ENCODE measurements at regions of chr6 and their contacts with region 1.

Region 1: DNA sequence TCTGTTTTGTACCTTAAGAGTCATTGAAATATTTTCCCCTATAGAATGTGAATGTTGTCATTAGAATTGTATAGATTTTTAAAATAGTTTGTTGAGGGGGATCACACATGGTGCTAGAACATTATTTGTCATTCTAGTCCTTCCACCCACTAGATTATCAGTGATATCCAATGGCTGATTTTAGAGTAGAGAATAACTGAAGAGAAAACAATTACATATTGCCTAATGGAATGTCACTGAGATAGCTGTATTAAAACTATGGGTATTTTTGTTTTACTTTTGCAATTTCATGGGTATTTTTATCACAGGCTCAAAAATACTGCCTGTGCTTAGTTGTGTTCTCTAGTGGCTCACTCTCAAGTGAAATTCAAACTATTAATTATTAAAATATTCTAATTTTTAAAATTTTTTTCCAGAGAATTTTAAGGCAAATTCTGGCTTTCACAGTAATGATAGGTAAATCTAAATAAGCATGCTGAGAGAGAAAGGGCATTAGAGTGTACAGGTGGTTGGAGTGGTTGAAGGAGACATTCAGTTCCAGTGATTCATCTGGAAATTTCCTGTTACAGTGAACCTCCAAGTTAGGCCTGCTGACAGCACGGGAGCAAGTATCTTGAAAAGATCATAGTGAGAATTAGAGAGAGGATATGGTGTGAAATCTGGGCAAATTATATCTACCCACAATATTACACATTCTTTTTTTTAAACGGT is 399.6 kb downstream of the NKAIN2 start:
- DNase-seq: peak; percentile 79
- H3K4me3 Mint-ChIP-seq: peak overlapping the region; percentile 17
- H3K27ac Mint-ChIP-seq: peak overlapping the region; percentile 99
- H3K4me1 Mint-ChIP-seq: peaks cover 28% of the 10 kb centered on the region
- H3K27me3 Mint-ChIP-seq: no peaks in the 10 kb centered on the region
- CTCF ChIP-seq: no peak

Region 2: GRCh38 chr6:124223611-124224345 is 20.5 kb after region 1 on chr6:
- CTCF ChIA-PET with region 1: no interaction called
- POLR2A ChIA-PET with region 1: interaction called, 7 read pairs
- intact Hi-C with region 1: loop called (anchors 1 kb)
- DNase-seq: peak; percentile 60
- H3K4me3 Mint-ChIP-seq: peak overlapping the region; percentile 3
- H3K27ac Mint-ChIP-seq: peak overlapping the region; percentile 96
- H3K4me1 Mint-ChIP-seq: peaks cover 38% of the 10 kb centered on the region
- H3K27me3 Mint-ChIP-seq: no peaks in the 10 kb centered on the region
- CTCF ChIP-seq: no peak

Region 3: DNA sequence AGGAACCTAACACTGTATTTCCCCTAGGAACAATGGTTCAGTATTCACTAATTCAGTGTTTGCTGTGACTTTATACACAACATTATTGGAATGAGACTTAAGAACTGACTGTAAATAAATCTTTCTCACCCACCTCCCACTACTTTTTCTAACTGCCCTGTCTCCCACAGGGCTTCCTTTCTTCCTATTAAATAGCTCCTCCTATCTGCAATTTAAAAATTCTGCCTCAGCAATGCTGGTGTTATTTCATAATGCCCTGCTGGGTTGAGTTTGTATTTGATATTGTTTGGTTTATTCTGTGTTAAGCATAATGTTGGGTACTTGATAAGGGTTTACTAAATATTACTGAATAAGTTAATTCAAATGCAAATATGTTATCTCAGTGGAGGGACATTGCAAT is 185.9 kb after region 1 on chr6:
- CTCF ChIA-PET with region 1: no interaction called
- POLR2A ChIA-PET with region 1: no interaction called
- intact Hi-C with region 1: loop called (anchors 10 kb)
- DNase-seq: peak; percentile 9
- H3K4me3 Mint-ChIP-seq: no peak overlapping the region
- H3K27ac Mint-ChIP-seq: no peak overlapping the region
- H3K4me1 Mint-ChIP-seq: no peaks in the 10 kb centered on the region
- H3K27me3 Mint-ChIP-seq: no peaks in the 10 kb centered on the region
- CTCF ChIP-seq: no peak

Region 4: GRCh38 chr6:124434421-124434820 is 231.2 kb after region 1 on chr6:
- CTCF ChIA-PET with region 1: no interaction called
- POLR2A ChIA-PET with region 1: no interaction called
- intact Hi-C with region 1: loop called (anchors 1 kb)
- DNase-seq: peak; percentile 75
- H3K4me3 Mint-ChIP-seq: peak overlapping the region; percentile 10
- H3K27ac Mint-ChIP-seq: peak overlapping the region; percentile 93
- H3K4me1 Mint-ChIP-seq: peaks cover 40% of the 10 kb centered on the region
- H3K27me3 Mint-ChIP-seq: no peaks in the 10 kb centered on the region
- CTCF ChIP-seq: no peak

Region 5: DNA sequence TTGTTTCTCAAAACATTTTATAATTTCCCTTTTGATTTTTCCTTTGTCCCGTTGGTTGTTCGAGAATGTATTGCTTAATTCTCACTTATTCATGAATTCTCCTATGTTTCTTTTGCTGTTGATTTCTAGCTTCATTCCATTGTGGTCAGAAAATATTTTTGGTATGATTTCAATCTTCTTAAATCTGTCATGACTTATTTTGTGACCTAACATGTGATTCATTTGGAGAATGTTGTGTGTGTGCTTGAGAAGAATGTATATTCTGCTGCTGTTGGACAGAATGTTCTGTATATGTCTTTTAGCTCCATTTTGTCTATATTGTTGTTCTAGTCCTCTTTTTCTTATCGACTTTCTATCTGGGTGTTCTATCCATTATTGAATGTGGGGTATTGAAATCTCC is 472.8 kb after region 1 on chr6:
- CTCF ChIA-PET with region 1: no interaction called
- POLR2A ChIA-PET with region 1: no interaction called
- intact Hi-C with region 1: loop called (anchors 10 kb)
- DNase-seq: peak; percentile 59
- H3K4me3 Mint-ChIP-seq: peak overlapping the region; percentile 51
- H3K27ac Mint-ChIP-seq: peak overlapping the region; percentile 91
- H3K4me1 Mint-ChIP-seq: peaks cover 32% of the 10 kb centered on the region
- H3K27me3 Mint-ChIP-seq: no peaks in the 10 kb centered on the region
- CTCF ChIP-seq: no peak

Region 6: GRCh38 chr6:124795643-124796463 is 592.6 kb after region 1 on chr6:
- CTCF ChIA-PET with region 1: interaction called, 3 read pairs
- POLR2A ChIA-PET with region 1: no interaction called
- intact Hi-C with region 1: loop called (anchors 10 kb)
- DNase-seq: peak; percentile 52
- H3K4me3 Mint-ChIP-seq: no peak overlapping the region
- H3K27ac Mint-ChIP-seq: no peak overlapping the region
- H3K4me1 Mint-ChIP-seq: peaks cover 16% of the 10 kb centered on the region
- H3K27me3 Mint-ChIP-seq: no peaks in the 10 kb centered on the region
- CTCF ChIP-seq: peak; percentile 85